Activated T-helper 2 cell treated with anti-CD3 and anti-CD28 coated beads, Interferon-gamma antibody, Interleukin-2, Interleukin-4, amounts not matched to agents 10 μg/mL and 5 μg/mL and 100 μg/mL, durations not matched to agents 14 hours and 24 hours and 36 hours (primary cell): ENCODE measurements at regions of chr21 and their contacts with region 1.

Region 1: DNA sequence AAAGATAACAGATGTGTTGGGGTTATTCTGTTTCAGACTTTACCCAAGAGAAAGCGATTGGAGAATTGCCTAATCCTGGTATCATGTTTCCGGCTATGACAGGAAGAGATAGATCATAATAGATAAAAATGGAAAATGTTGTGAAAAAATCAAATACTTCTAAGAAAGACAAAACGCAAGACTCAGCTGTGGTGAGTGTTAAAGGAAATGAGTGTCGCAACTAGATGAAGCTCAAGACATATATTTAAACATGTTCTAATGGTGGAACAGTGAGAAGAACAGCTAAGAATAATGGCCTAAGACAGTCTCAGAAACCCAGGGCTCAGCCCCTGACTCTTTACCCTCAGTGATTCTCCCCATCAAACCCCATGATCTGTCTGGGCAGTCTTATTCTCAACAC is 426.7 kb upstream of the RUNX1 start:
- DNase-seq: no peak
- H3K4me3 Mint-ChIP-seq: no peak overlapping the region
- H3K27ac Mint-ChIP-seq: peak overlapping the region; percentile 6
- H3K4me1 Mint-ChIP-seq: peaks cover 25% of the 10 kb centered on the region
- H3K27me3 Mint-ChIP-seq: peaks cover 13% of the 10 kb centered on the region

Region 2: DNA sequence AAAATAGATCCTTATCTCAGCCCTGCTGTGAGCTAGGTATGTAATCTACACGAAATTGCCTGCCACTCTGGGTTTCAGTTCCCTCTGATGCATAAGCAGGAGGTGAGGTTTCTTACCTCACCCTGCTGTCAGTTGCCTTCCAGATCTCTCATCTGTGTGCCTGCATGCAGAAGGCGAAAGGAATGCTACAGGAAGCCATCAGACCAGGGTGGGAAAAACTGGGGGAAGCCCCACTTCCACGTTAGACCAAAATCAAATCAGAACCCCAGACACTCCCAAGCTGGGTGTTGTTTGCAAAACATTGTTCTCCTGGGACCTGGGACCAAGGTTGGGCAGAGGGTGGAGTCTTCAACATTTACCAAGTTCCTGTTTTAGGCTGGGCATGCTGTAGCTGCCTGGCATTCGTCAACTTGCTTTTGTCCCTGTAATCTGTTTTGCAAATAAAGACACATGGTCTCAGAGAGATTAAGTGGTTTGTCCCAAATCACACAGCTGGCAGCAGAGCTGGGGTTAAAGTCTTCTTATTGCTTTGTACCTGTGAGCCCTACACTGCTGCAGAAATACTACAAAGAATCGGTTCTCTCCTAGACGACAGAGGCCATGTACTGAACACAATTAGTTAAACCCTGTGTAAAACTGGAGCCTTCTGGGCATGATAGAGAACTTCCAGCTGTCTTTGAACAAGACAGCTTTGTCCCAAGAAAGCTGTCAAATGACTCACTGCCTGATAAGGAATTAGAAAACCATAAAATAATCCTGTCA is 36.9 kb before region 1 on chr21:
- intact Hi-C with region 1: no loop called
- DNase-seq: no peak
- H3K4me3 Mint-ChIP-seq: no peak overlapping the region
- H3K27ac Mint-ChIP-seq: no peak overlapping the region
- H3K4me1 Mint-ChIP-seq: peaks cover 13% of the 10 kb centered on the region
- H3K27me3 Mint-ChIP-seq: peaks cover 28% of the 10 kb centered on the region

Region 3: GRCh38 chr21:35508139-35508888 is 32.5 kb after region 1 on chr21:
- intact Hi-C with region 1: no loop called
- DNase-seq: no peak
- H3K4me3 Mint-ChIP-seq: no peak overlapping the region
- H3K27ac Mint-ChIP-seq: no peak overlapping the region
- H3K4me1 Mint-ChIP-seq: peaks cover 41% of the 10 kb centered on the region
- H3K27me3 Mint-ChIP-seq: no peaks in the 10 kb centered on the region

Region 4: DNA sequence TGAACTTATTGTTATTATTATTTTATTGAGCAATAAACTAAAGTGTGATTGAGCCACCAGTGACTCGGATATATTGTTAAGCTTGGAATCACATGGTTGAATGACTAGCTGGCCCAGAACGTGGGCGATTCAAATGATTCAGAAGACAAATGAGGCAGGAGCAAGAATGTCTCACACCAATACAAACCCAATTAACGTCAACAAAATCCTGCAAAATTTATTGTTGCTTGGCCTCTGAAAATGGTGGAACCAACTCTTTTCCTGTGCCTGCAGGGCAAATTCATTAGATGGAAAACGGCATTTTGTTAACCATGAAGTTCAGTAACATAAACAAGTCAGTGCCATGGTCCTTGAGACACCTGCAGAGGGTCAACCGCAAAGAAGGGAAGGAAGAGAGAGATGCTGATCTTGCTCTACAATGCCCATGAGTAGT is 102.6 kb after region 1 on chr21:
- intact Hi-C with region 1: loop called (anchors 1 kb)
- DNase-seq: no peak
- H3K4me3 Mint-ChIP-seq: no peak overlapping the region
- H3K27ac Mint-ChIP-seq: peak overlapping the region; percentile 71
- H3K4me1 Mint-ChIP-seq: peaks cover 26% of the 10 kb centered on the region
- H3K27me3 Mint-ChIP-seq: peaks cover 5% of the 10 kb centered on the region